ENCODE measurements at regions of chr18 and their contacts with region 1.

Region 1: GRCh38 chr18:6891788-6892187 is 162.3 kb downstream of the ARHGAP28 start:
- DNase-seq: no peak
- ATAC-seq: no peak
- H3K4me3 ChIP-seq: no peak overlapping the region
- H3K27ac ChIP-seq: no peak overlapping the region
- H3K4me1 ChIP-seq: no peaks in the 10 kb centered on the region
- H3K27me3 ChIP-seq: no peaks in the 10 kb centered on the region
- CTCF ChIP-seq: no peak
- POLR2A ChIP-seq: no peak

Region 2: DNA sequence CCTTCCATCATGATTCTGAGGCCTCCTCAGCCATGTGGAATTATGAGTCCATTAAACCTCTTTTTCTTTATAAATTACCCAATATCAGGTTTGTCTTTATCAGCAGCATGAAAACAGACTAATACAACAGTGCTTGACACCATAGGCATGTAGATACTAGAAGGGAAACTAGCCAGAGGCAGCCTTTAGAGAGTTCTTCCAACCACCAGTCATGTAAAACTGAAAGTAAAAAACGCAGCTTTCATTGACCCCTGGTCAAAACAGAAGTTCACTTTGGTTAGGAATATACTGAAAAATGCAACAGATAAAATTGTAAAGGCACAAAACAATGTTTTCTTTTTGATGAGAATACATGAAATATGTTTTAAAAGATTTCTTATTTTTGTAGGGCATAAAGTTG is 354.3 kb before region 1 on chr18:
- in situ Hi-C with region 1: loop called in 3 of 4 experiments (anchors 5 to 10 kb)
- intact Hi-C with region 1: no loop called
- DNase-seq: no peak
- ATAC-seq: no peak
- H3K4me3 ChIP-seq: no peak overlapping the region
- H3K27ac ChIP-seq: no peak overlapping the region
- H3K4me1 ChIP-seq: peaks cover 0 to 6% of the 10 kb centered on the region in 2 donors
- H3K27me3 ChIP-seq: no peaks in the 10 kb centered on the region
- CTCF ChIP-seq: no peak
- POLR2A ChIP-seq: no peak

Region 3: DNA sequence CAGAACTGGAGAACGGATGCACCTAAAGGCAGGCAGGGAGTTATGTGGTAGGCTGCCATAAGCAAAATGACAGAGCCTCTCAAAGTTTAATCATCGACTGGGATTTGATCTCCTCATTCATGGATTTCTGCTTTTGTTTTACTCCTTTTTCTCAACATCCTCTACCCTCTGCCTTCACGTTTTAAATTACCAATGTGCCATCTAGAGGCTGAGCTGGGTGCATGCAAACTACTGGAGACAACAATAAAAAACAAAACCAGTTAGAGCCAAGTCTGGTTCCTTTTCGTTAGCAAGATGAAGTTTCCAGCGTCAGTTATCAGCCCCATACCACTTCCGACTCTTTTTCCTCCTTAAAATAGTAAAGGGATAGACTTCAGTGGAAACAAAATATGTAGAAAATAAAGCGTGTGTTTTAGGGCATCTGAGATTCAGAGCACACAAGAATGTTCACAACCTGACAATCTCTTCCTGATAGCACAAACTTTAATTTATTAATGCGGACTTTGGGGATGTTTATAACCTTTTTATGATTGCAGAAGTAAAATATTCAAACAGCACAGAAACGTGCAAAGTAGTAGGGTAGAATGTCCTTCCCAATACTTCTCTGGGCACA is 108.8 kb after region 1 on chr18:
- in situ Hi-C with region 1: no loop called
- intact Hi-C with region 1: no loop called
- DNase-seq: no peak
- ATAC-seq: no peak
- H3K4me3 ChIP-seq: no peak overlapping the region
- H3K27ac ChIP-seq: no peak overlapping the region
- H3K4me1 ChIP-seq: no peaks in the 10 kb centered on the region
- H3K27me3 ChIP-seq: no peaks in the 10 kb centered on the region
- CTCF ChIP-seq: no peak
- POLR2A ChIP-seq: no peak